ENCODE measurements at regions of chr11 and their contacts with region 1.

Region 1: GRCh38 chr11:4187055-4187988 is 92.7 kb downstream of the RRM1 start:
- DNase-seq: peak; percentile 89
- H3K4me3 Mint-ChIP-seq: peak overlapping the region; percentile 73
- H3K27ac Mint-ChIP-seq: no peak overlapping the region
- H3K4me1 Mint-ChIP-seq: peaks cover 2% of the 10 kb centered on the region
- H3K27me3 Mint-ChIP-seq: peaks cover 9% of the 10 kb centered on the region

Region 2: DNA sequence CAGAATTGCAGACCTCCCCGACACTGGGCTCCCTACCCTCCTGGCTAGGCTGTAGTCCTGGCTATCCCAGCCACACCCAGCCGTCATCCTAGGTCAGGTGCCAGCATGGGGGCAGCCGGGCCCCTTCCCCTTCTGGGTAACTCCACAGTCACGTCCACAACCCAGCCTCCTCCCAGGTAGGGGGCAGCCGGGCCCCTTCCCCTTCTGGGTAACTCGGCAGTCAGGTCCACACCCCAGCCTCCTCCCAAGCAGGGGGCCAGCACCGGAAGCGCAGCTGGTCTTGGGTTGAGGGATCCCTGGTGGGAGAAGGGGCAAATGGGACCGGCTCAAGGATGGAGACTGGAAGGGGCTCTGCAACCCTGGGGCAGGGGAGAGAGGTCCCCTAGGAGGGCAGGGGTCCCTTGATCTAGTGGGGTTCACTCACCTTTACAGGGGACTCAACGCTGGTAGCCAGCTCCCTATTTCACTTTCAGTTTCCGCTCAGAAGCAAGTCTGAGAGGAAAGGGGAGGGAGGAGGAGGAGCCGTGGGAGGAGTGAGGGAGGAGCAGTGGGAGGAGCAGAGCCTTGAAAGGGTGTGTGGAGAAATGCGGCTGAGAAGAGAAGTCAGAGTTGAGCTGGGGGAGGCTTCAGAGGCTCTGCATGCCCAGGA is 206.0 kb after region 1 on chr11 and contains the start of gene TRIM21:
- CTCF ChIA-PET with region 1: interaction called, 10 read pairs
- intact Hi-C with region 1: loop called (anchors 1 kb)
- DNase-seq: peak; percentile 96
- H3K4me3 Mint-ChIP-seq: peak within 1 kb of the TSS; percentile 86
- H3K27ac Mint-ChIP-seq: peak within 1 kb of the TSS; percentile 88
- H3K4me1 Mint-ChIP-seq: peaks cover 34% of the 10 kb centered on the region
- H3K27me3 Mint-ChIP-seq: peaks cover 8% of the 10 kb centered on the region
- total RNA-seq, gene TRIM21: 23.5 to 26.0 TPM

Region 3: DNA sequence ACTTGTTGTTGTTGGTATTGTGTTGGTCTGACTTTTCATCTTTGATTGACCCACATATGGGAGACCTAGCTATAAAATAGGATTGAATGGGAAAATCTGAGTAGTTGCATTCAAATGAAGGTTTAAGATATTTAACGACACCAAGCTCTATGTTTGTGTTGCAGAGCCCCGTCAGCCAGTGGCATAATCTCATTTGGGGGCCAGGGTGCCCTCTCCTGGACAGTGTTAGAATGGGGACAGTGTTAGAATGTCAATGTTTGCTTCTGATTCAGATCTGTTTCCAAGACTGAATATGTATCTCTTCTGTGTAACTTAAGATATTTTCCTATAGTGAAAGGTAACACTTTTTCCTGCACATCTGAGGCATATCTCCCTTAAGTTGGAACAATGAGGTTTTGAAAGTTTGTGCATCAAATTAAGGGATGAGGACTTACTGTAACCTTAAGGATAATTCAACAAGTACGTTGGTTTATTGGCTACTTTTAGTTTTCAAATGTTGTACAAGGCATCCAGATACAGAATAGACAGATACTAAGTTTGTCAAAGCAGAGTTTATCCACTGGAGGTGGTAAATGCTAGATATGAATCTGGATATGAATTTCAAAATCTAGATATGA is 352.4 kb after region 1 on chr11:
- CTCF ChIA-PET with region 1: interaction called, 95 read pairs
- intact Hi-C with region 1: loop called (anchors 1 kb)
- DNase-seq: peak; percentile 79
- H3K4me3 Mint-ChIP-seq: no peak overlapping the region
- H3K27ac Mint-ChIP-seq: no peak overlapping the region
- H3K4me1 Mint-ChIP-seq: no peaks in the 10 kb centered on the region
- H3K27me3 Mint-ChIP-seq: no peaks in the 10 kb centered on the region

Region 4: DNA sequence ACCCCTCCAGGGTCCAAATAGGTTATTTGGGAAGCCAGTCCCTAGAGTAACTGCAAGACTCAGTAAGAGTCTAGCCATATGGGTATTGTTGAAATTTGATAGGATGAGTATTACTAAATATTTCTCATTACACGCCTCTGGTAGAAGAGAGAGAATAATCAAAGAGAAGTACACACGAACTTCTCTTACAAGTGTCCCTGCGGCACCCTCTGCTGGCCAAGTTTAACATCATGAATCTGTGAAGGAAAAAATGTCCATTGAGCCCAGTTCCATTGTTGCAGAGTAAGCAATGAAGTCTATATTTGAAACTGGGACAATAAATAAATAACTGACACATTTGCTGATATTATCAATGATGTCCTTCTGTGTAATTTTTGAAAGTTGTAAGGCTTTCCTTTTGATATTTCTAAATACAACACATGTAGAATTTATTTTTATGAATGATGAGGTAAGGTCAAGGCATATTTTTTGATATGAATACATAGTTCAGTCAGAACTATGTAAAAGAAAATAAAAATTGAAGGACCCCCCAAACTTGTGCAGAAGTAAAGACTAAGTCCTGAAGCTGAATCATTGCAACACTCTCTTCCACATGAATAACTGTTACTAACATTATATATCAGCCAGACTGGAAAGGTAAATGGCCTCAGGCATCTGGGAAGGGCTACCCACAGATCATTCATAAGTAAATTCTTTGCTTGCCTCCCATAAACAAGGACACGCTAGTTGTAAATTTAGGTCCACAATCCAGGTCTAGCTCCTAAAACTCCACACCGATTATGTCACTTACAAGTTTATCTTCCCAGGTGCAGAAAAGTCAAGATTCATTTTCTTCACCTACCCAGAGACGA is 817.3 kb after region 1 on chr11:
- CTCF ChIA-PET with region 1: no interaction called
- intact Hi-C with region 1: loop called (anchors 1 kb)
- DNase-seq: peak; percentile 62
- H3K4me3 Mint-ChIP-seq: no peak overlapping the region
- H3K27ac Mint-ChIP-seq: no peak overlapping the region
- H3K4me1 Mint-ChIP-seq: no peaks in the 10 kb centered on the region
- H3K27me3 Mint-ChIP-seq: peaks cover 13% of the 10 kb centered on the region

Region 5: DNA sequence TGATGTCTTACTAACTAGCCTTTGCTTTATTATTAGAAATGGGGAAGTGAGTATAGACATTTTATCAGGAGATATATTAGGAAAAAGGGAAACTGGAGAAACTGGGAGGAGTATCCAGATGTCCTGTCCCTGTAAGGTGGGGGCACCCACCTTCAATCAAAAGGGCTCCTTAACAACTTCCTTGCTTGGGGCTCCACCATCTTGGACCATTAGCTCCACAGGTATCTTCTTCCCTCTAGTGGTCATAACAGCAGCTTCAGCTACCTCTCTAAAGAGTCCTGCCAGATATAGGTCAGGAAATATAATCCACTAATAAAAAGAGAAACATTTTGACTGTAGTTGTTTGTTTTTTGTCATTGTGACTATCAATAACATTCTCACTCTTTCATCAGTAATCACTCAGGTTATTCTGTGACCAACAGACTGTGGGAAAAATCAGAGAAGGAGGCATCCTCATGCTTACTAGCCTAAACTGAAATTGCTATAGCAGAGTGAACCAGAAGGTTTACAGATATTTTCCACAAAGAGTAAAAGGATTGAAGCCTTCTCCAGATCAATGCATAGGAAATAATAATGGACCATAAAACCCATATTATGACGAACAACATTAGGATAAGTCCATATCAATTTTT is 1104.0 kb after region 1 on chr11:
- CTCF ChIA-PET with region 1: no interaction called
- intact Hi-C with region 1: loop called (anchors 2 kb)
- DNase-seq: no peak
- H3K4me3 Mint-ChIP-seq: no peak overlapping the region
- H3K27ac Mint-ChIP-seq: no peak overlapping the region
- H3K4me1 Mint-ChIP-seq: no peaks in the 10 kb centered on the region
- H3K27me3 Mint-ChIP-seq: no peaks in the 10 kb centered on the region

Region 6: GRCh38 chr11:6027501-6027900 is 1840.2 kb after region 1 on chr11:
- CTCF ChIA-PET with region 1: no interaction called
- intact Hi-C with region 1: no loop called
- DNase-seq: no peak
- H3K4me3 Mint-ChIP-seq: no peak overlapping the region
- H3K27ac Mint-ChIP-seq: no peak overlapping the region
- H3K4me1 Mint-ChIP-seq: no peaks in the 10 kb centered on the region
- H3K27me3 Mint-ChIP-seq: peaks cover 12% of the 10 kb centered on the region

Measured in activated naive CD4-positive, alpha-beta T cell treated with anti-CD3 and anti-CD28 coated beads for 36 hours (primary cell).